Activated CD4-positive, alpha-beta T cell treated with anti-CD3 and anti-CD28 coated beads for 36 hours (primary cell): ENCODE measurements at regions of chr1 and their contacts with region 1.

Region 1: DNA sequence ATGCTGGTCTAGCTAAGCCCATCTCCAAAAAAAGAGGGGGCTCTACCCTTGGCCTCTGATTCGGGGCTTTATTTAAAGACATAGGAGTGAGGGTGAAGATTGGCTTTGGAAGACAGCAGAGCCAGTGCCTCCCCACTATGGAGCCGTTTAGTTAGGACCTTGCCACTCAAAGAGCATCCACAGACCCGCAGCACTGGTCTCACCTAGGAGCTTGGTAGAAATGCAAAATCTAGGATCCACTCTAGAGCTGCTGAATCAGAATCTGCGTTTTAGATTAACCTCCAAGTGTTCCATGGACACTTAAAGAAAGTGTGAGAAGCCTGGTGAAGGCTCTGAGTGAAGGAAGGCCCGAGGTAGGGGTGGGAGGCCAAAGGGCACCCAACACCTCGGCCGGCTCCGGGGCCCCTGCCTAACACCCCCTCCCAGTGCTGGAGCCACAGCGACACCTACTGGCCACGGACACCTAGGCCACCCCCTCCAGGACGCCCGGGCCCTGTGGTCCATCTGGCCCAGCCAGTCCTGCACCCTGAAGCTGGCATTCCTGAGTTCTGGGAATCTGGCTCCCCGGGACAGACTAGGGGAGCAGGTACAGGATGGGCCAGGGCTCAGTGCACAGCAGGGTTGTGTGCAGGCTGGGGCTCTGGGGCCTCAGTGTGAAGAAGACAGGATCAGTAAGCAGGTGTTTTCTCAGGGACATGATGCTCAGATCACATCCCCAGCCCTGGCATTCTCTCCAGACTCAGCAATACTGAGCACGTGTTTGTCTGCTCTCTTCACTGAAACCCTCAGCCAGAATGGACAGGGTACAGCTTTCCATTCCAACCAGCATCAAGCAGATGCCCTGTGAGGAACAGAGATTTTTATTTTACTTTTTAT is 79.2 kb downstream of the TMEM53 start:
- DNase-seq: peak; percentile 91
- ATAC-seq: peak; percentile 100
- H3K4me3 Mint-ChIP-seq: no peak overlapping the region
- H3K27ac Mint-ChIP-seq: no peak overlapping the region
- H3K4me1 Mint-ChIP-seq: no peaks in the 10 kb centered on the region
- H3K27me3 Mint-ChIP-seq: peaks cover 2% of the 10 kb centered on the region

Region 2: DNA sequence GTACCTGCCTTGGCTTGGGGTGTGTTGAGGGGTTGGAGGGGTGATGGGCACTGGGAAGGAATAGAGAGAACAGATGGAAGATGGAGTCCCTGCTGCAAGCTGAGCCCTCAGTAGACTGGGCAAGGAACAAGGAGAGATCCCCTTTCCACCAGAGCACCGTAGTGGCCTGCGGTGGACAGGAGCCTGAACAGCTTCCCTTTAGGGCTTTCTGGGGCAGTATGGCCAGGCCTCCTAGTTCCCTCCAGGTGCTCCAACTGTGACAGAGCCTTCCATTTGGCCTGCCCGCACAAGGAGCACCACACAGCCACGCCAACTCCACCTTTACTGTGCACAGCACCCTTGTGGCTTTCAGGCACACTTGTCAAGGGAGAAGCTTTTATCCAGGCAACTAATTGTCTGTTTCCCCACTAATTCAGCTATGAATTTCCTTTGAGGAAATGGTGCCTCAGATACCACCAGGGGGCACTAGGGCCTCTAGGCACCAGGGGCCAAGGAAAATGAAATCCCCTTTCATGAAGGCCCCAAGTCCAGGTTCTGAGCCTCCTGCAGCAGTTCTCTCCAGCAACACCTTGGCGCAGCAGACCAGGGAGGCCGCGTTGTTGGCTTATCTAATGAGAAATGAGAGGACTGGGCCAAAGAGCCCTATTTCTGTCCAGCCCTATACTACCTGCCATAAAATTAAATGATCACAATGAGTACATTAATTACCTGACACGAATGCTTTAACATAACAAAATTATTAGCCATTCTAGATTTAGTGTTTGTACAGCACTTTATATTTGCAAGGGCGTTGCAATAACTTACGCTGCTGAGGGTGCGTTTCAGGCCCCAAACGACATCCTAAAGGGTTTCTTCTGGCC is 217.0 kb before region 1 on chr1:
- CTCF ChIA-PET with region 1: interaction called, 56 read pairs
- POLR2A ChIA-PET with region 1: no interaction called
- intact Hi-C with region 1: loop called (anchors 1 kb)
- DNase-seq: peak; percentile 68
- ATAC-seq: no peak
- H3K4me3 Mint-ChIP-seq: no peak overlapping the region
- H3K27ac Mint-ChIP-seq: no peak overlapping the region
- H3K4me1 Mint-ChIP-seq: no peaks in the 10 kb centered on the region
- H3K27me3 Mint-ChIP-seq: no peaks in the 10 kb centered on the region

Region 3: GRCh38 chr1:44571712-44572571 is 23.2 kb before region 1 on chr1:
- CTCF ChIA-PET with region 1: interaction called, 21 read pairs
- POLR2A ChIA-PET with region 1: no interaction called
- intact Hi-C with region 1: no loop called
- DNase-seq: peak; percentile 20
- ATAC-seq: peak; percentile 80
- H3K4me3 Mint-ChIP-seq: no peak overlapping the region
- H3K27ac Mint-ChIP-seq: no peak overlapping the region
- H3K4me1 Mint-ChIP-seq: no peaks in the 10 kb centered on the region
- H3K27me3 Mint-ChIP-seq: peaks cover 5% of the 10 kb centered on the region